ENCODE measurements at regions of chr10 and their contacts with region 1.

Region 1: GRCh38 chr10:110610308-110610774 is 33.8 kb upstream of the RBM20 start:
- DNase-seq: peak in 5 of 10 donors; percentile 29 to 86 (median 39)

Region 2: DNA sequence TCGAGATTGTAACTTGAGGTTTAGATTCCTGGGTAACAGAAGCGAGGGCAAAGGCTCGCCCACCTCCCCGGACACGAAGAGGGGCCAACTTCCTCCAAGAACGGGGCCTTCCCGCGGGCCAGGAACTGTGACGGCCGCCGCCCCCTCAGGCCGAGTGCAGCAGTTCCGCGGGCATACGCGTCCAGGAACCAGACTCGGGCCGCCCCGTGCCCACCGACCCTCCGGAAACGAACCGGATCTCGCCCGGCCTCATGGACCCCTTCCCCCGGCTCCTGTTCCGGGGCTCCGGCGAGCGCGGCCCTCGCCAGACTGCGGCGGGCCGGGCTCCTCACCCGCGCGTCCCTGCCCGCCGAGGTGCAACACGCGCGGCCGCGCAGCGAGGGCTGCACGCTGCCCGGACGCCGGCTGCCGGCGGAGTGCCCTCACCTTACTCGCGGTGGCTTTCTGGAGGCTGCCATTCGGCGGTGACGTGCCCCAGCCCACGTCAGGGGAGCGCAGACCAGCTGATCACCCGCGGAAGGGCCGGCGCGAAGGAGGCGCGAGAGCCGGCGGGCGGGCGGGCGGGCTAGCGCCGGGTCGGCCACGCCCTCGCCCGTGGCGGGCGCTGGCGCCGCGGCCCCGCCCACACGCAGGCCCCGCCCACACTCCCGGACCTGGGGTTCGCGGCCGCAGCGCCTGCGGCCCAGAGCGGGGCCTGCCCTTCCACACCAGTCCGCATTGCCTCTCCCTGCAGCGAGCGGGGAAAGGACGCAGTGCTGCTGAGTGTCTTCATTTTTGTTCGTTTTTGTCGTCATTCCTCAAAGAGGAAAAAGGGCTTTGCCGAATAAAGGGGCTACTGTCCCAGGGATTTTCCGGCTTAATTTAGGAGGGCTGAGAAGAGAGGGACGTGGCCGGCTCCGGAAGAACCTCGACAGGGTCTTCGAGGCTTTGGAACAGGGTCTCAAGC is 687.1 kb before region 1 on chr10 and contains the start of gene XPNPEP1:
- intact Hi-C with region 1: no loop called
- DNase-seq: peak; percentile 79 to 99 (median 88)

Region 3: GRCh38 chr10:110681023-110681681 is 70.8 kb after region 1 on chr10:
- intact Hi-C with region 1: loop called (anchors 2 kb)
- DNase-seq: peak in 5 of 10 donors; percentile 13 to 80 (median 29)

Region 4: GRCh38 chr10:110706690-110707098 is 96.4 kb after region 1 on chr10:
- intact Hi-C with region 1: no loop called
- DNase-seq: no peak

Measured in posterior cingulate gyrus (tissue), 11 donors.